ENCODE measurements at regions of chr5 and their contacts with region 1.

Region 1: DNA sequence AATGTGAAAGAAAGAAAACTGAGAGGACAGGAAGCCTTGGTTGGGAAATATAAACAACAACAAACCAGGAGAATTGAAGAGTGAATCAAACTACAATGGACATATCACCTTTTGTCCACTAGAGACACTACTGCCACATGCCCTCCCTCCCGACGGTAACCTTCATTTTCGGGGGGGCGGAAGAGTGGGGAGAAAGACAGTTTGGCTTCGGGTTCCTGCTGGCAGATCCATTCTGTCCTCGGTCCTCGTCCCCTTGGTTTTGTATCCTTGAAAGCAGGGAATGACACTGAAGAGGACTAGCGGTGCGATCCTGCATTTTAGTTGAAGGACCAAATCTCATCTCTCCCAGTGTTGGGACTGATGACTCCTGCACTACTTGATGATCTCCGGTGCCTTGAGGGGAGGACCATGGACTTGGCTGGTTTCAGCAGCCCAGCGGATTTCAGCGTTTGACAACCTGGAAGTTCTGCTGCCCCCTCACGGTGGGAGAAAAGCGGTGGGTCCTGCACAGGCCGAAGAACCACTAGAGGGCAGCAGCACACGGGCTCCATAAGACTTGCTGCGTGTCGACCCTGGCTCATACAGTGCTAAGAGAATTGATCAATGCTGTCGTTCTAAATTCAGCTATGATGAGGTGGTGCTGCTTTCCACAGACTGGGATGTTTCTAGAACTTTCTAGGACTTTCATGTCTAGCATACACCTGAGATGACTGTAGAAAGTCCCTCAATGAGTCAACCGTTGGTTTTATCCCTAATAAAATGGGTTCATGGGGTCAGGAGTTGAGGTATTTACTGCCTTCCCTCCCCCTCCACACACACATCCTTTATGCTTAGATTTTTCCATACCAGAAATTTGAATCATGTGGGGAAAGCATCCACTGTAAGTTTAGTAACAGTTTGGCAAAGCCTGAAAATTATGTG is 15.1 kb upstream of the ZNF131 start:
- DNase-seq: peak; percentile 93
- ATAC-seq: peak; percentile 96 to 97

Region 2: GRCh38 chr5:42908509-42909488 is 196.8 kb before region 1 on chr5:
- intact Hi-C with region 1: loop called in 1 of 2 experiments (anchors 10 kb)
- DNase-seq: peak; percentile 95
- ATAC-seq: peak; percentile 94

Region 3: GRCh38 chr5:43066799-43067741 is 38.6 kb before region 1 on chr5:
- intact Hi-C with region 1: loop called in 1 of 2 experiments (anchors 5 kb)
- DNase-seq: peak; percentile 89
- ATAC-seq: peak; percentile 70 to 71

Region 4: GRCh38 chr5:43389679-43390329 is 284.2 kb after region 1 on chr5:
- intact Hi-C with region 1: loop called in 1 of 2 experiments (anchors 5 kb)
- DNase-seq: peak; percentile 32
- ATAC-seq: peak; percentile 95 to 96

Region 5: GRCh38 chr5:43680286-43680685 is 574.7 kb after region 1 on chr5:
- intact Hi-C with region 1: no loop called
- DNase-seq: no peak
- ATAC-seq: no peak